Activated naive CD4-positive, alpha-beta T cell treated with anti-CD3 and anti-CD28 coated beads for 36 hours (primary cell): ENCODE measurements at regions of chr2 and their contacts with region 1.

Region 1: DNA sequence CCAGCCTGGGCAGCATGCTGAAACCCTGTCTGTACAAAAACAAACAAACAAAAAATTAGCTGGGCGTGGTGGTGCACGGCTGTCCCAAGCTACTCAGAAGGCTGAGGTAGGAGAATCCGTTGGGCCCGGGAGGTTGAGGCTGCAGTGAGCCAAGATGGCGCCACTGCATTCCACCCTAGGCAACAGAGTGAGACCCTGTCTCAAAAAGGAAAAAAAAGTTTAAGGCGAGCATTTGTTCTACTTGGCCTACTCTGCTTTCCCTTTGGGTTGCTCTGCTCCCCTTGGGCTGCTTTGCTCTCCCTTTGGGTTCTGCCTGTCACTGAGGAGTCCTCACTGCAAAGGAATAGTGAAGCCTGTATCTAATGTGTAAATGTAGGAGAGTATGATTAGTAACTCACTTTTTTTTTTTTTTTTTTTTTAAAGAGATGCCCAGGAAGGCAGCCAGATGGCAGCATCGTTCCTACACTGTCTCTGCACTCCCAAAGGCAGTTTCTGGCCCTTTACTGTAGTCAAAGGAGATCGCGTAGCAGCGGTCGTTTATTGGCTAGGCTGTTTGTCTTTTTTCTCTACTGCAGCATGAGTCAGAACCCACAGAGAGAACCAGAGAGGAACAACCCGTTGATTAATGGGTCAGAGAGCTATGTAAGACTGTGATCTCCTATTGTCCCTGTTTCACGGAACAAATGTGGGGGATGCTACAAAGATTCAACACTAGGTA is 118.3 kb upstream of the CWC22 start:
- DNase-seq: peak; percentile 64
- H3K4me3 Mint-ChIP-seq: no peak overlapping the region
- H3K27ac Mint-ChIP-seq: no peak overlapping the region
- H3K4me1 Mint-ChIP-seq: peaks cover 3% of the 10 kb centered on the region
- H3K27me3 Mint-ChIP-seq: peaks cover 10% of the 10 kb centered on the region

Region 2: GRCh38 chr2:180604077-180604476 is 478.7 kb after region 1 on chr2:
- CTCF ChIA-PET with region 1: interaction called, 3 read pairs
- intact Hi-C with region 1: loop called (anchors 10 kb)
- DNase-seq: peak; percentile 8
- H3K4me3 Mint-ChIP-seq: no peak overlapping the region
- H3K27ac Mint-ChIP-seq: no peak overlapping the region
- H3K4me1 Mint-ChIP-seq: no peaks in the 10 kb centered on the region
- H3K27me3 Mint-ChIP-seq: no peaks in the 10 kb centered on the region